ENCODE measurements at regions of chr12 and their contacts with region 1.

Region 1: DNA sequence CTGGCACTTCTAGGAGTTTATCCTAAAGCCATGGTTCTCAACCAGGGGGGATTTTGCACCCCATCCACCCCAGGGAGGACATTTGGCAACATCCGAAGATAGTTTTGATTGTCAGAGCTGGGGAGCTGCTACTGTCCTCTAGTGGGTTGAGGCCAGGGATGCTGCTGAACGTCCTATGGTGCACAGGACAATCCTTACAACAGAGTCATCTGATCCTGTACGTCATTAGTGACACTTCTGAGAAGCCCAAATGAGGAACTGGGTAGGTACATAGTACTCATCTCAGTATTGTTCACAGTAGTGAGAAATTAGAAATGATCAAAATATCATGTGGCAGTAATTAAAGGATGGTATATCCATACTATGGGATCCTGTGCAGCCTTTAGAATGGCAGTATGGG is 185.1 kb downstream of the CHST11 start:
- DNase-seq: no peak
- ATAC-seq: no peak
- H3K4me3 ChIP-seq: no peak overlapping the region
- H3K27ac ChIP-seq: no peak overlapping the region
- H3K4me1 ChIP-seq: no peaks in the 10 kb centered on the region
- H3K27me3 ChIP-seq: peaks cover 10% of the 10 kb centered on the region
- CTCF ChIP-seq: no peak
- POLR2A ChIP-seq: no peak
- RAD21 ChIP-seq: no peak

Region 2: GRCh38 chr12:104763168-104763805 is 121.4 kb after region 1 on chr12:
- CTCF ChIA-PET with region 1: no interaction called
- POLR2A ChIA-PET with region 1: interaction called, 11 read pairs
- dilution Hi-C with region 1: no loop called
- in situ Hi-C with region 1: no loop called
- intact Hi-C with region 1: no loop called
- DNase-seq: peak; percentile 38
- ATAC-seq: no peak
- H3K4me3 ChIP-seq: no peak overlapping the region
- H3K27ac ChIP-seq: no peak overlapping the region
- H3K4me1 ChIP-seq: no peaks in the 10 kb centered on the region
- H3K27me3 ChIP-seq: peaks cover 11% of the 10 kb centered on the region
- CTCF ChIP-seq: no peak
- POLR2A ChIP-seq: no peak
- RAD21 ChIP-seq: no peak